ENCODE measurements at regions of chr18 and their contacts with region 1.

Region 1: DNA sequence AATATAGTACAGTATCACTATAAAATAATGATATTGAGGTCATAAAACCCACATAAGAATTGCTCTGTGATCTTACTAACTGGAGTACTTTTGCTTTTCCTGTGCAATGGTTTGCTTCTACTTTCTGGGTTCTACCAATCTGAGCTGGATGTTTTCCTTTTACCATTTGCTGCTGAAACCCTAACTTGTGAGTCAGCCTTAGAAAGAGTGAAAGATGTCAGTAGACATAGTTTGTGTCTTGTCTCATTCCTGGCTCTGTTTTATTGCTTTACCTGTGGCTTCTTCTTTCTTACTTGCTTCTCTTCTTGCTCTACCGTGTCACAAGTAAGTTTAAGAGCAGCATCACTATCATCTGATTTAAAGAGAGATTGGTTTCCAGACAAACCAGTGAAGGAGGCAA is 61.0 kb downstream of the MBD2 start:
- DNase-seq: no peak
- H3K4me3 Mint-ChIP-seq: no peak overlapping the region
- H3K27ac Mint-ChIP-seq: peak overlapping the region; percentile 79
- H3K4me1 Mint-ChIP-seq: peaks cover 25% of the 10 kb centered on the region
- H3K27me3 Mint-ChIP-seq: no peaks in the 10 kb centered on the region

Region 2: DNA sequence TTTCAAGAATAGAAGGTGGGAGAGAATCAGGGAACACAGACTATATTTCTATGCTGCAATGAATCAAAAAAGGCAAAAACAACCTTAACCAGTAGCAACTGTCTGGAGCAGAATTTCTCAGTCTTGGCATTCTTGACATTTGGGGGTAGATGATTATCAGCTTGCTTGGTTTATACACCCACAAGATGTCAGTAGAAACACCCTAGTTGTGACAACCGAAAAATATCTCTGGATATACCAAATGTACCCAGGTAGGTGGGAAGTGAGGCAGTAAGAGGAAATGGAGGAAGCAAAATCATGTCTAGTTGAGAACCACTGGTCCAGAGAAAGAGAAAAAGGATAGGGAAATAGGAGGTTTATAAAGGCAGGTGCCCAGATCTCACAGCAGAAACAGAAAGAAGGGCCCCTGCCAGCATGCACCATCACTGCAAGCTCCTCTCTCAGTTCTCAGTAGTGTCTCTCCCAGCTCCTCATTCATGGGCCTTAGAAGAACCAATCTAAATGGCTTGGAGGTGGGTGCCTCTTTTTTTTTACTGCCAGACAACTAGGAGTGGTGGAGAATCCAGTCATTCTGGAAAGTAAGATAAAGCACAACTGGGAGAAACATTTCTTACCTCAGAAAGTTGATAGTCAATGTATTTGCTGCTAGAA is 10.7 kb after region 1 on chr18:
- intact Hi-C with region 1: loop called (anchors 1 kb)
- DNase-seq: no peak
- H3K4me3 Mint-ChIP-seq: peak overlapping the region; percentile 41
- H3K27ac Mint-ChIP-seq: peak overlapping the region; percentile 94
- H3K4me1 Mint-ChIP-seq: peaks cover 61% of the 10 kb centered on the region
- H3K27me3 Mint-ChIP-seq: no peaks in the 10 kb centered on the region